ENCODE measurements at regions of chr7 and their contacts with region 1.

Region 1: DNA sequence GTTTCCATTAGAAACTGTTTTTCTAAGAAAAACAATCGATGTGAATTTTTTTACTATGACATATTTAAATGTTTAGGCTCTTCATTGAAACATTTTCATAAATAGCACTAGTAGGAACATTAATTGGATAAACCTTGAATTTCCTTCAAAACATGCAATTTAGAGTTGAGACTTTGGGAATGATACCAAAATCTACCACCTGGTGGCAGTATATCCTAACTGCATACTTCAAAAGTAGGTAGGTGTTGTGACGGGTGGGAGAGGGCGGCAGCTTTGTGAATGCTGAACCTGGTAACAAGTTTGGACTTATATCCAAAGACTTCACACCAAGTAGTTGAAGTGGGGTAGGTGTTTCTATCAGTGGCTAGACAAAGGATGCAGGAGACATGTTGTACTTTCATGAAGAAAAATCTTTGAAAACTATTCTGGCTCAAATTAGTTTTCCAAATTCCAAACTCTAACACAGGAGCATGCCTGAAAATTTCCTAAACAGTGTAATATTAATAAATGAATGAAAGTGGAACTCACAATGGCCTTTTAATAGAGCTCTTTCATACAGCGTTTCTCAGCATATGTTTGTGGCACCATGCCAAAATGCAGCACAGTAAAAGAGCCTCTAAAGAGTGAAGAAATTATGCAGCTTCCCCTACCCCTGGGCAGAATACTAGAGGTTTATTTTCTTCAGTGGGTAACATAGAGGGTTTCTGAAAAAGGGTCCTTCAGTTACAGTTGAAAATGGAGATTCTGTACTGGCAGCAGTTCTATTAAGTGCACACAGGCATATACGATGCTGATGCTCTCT is 201.0 kb upstream of the TPK1 start:
- DNase-seq: peak; percentile 2
- H3K4me3 Mint-ChIP-seq: no peak overlapping the region
- H3K27ac Mint-ChIP-seq: no peak overlapping the region
- H3K4me1 Mint-ChIP-seq: no peaks in the 10 kb centered on the region
- H3K27me3 Mint-ChIP-seq: peaks cover 3% of the 10 kb centered on the region

Region 2: DNA sequence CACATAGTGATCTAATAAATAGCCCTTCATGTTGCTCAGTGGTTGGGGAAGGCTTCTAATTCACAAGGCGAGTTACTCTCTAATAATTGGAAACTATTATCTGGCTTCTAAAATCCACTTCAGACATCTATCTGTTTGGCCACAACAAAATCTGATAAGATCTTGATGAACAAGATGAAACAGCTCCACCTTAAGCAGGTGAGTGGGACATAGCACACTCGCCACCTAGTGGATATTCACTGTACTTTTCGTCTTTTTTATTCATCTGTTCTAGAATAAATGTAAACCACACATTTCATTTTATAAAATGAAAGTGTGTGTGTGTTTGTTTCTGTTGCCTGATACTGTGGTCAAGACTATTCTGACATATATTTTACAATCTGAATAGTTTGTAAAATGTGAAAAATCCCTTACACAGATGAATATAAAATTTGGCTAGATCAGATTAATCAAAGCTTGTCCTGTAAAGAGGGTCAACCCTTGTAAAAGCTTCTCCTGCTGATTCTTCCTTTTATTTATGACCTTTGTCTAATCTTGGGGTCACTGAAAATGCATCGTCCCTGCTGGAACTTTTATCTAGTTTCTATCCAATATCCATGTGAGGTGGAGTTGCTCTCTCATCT is 1053.3 kb after region 1 on chr7:
- intact Hi-C with region 1: loop called (anchors 1 kb)
- DNase-seq: no peak
- H3K4me3 Mint-ChIP-seq: no peak overlapping the region
- H3K27ac Mint-ChIP-seq: no peak overlapping the region
- H3K4me1 Mint-ChIP-seq: no peaks in the 10 kb centered on the region
- H3K27me3 Mint-ChIP-seq: no peaks in the 10 kb centered on the region